CD4-positive, alpha-beta memory T cell (primary cell): ENCODE measurements at regions of chr17 and their contacts with region 1.

Region 1: DNA sequence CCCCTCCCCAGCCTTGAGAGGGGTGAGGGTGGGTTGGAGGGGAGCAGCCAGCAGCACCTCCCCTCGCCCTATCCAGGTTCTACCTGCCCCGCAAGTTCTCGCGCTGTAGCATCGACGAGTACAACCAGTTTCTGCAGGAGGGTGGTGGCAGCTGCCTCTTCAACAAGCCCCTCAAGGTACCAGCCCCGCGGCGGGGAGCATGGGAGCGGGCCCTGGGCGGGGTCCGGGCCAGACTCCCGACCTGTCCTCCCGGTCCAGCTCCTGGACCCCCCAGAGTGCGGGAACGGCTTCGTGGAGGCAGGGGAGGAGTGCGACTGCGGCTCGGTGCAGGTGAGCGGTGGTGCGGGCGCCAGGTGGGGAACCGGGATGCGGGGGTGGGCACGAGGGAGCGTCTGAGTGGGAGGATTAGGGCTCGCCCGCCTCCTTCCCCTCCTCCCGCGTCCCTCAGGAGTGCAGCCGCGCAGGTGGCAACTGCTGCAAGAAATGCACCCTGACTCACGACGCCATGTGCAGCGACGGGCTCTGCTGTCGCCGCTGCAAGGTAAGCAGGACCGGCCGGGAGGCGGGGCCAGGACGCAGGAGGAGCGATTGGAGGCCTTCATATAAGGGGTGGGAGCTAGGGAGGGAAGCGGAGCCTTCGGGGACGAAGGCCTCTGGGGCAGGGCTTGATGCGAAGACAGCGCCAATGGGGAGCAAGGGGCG is 16.5 kb downstream of the ADAM11 start:
- DNase-seq: peak; percentile 94 to 99 (median 96)
- H3K4me3 ChIP-seq: peak overlapping the region; percentile 57 to 73
- H3K4me3 Mint-ChIP-seq: peak overlapping the region; percentile 88 to 97 (median 90)
- H3K27ac ChIP-seq: peak overlapping the region; percentile 30
- H3K27ac Mint-ChIP-seq: peak overlapping the region; percentile 72 to 89 (median 84)
- H3K4me1 ChIP-seq: peaks cover 18% of the 10 kb centered on the region
- H3K4me1 Mint-ChIP-seq: peaks cover 5 to 21% (median 9%) of the 10 kb centered on the region in 4 donors
- H3K27me3 ChIP-seq: no peaks in the 10 kb centered on the region
- H3K27me3 Mint-ChIP-seq: peaks cover 4 to 8% of the 10 kb centered on the region in 2 donors

Region 2: GRCh38 chr17:44864866-44865660 is 89.8 kb after region 1 on chr17:
- CTCF ChIA-PET with region 1: interaction called, 263 read pairs
- POLR2A ChIA-PET with region 1: interaction called, 6 read pairs
- intact Hi-C with region 1: loop called (anchors 1 kb)
- DNase-seq: peak; percentile 62 to 70 (median 69)
- H3K4me3 ChIP-seq: no peak overlapping the region
- H3K4me3 Mint-ChIP-seq: no peak overlapping the region
- H3K27ac ChIP-seq: no peak overlapping the region
- H3K27ac Mint-ChIP-seq: no peak overlapping the region
- H3K4me1 ChIP-seq: no peaks in the 10 kb centered on the region
- H3K4me1 Mint-ChIP-seq: peaks cover 0 to 4% (median 0%) of the 10 kb centered on the region in 4 donors
- H3K27me3 ChIP-seq: no peaks in the 10 kb centered on the region
- H3K27me3 Mint-ChIP-seq: no peaks in the 10 kb centered on the region

Region 3: GRCh38 chr17:44899069-44899782 is 123.9 kb after region 1 on chr17 and contains the start of gene EFTUD2:
- CTCF ChIA-PET with region 1: interaction called, 5 read pairs
- POLR2A ChIA-PET with region 1: interaction called, 5 read pairs
- intact Hi-C with region 1: loop called (anchors 1 kb)
- DNase-seq: peak; percentile 93 to 98 (median 96)
- H3K4me3 ChIP-seq: peak within 1 kb of the TSS; percentile 71 to 92
- H3K4me3 Mint-ChIP-seq: peak within 1 kb of the TSS; percentile 91 to 99 (median 94)
- H3K27ac ChIP-seq: peak within 1 kb of the TSS; percentile 85
- H3K27ac Mint-ChIP-seq: peak within 1 kb of the TSS; percentile 99 to 100 (median 100)
- H3K4me1 ChIP-seq: peaks cover 21% of the 10 kb centered on the region
- H3K4me1 Mint-ChIP-seq: peaks cover 18 to 48% (median 28%) of the 10 kb centered on the region in 4 donors
- H3K27me3 ChIP-seq: no peaks in the 10 kb centered on the region
- H3K27me3 Mint-ChIP-seq: no peaks in the 10 kb centered on the region
- total RNA-seq, gene EFTUD2: 98.9 to 101 TPM

Region 4: GRCh38 chr17:45021607-45022287 is 246.5 kb after region 1 on chr17:
- CTCF ChIA-PET with region 1: interaction called, 3 read pairs
- POLR2A ChIA-PET with region 1: interaction called, 5 read pairs
- intact Hi-C with region 1: loop called (anchors 1 kb)
- DNase-seq: peak; percentile 50 to 66 (median 55)
- H3K4me3 ChIP-seq: peak overlapping the region in 1 of 2 donors; percentile 47
- H3K4me3 Mint-ChIP-seq: peak overlapping the region in 7 of 8 donors; percentile 35 to 84 (median 69)
- H3K27ac ChIP-seq: no peak overlapping the region
- H3K27ac Mint-ChIP-seq: peak overlapping the region in 3 of 7 donors; percentile 7 to 39 (median 24)
- H3K4me1 ChIP-seq: peaks cover 25% of the 10 kb centered on the region
- H3K4me1 Mint-ChIP-seq: peaks cover 11 to 22% (median 18%) of the 10 kb centered on the region in 4 donors
- H3K27me3 ChIP-seq: peaks cover 20% of the 10 kb centered on the region
- H3K27me3 Mint-ChIP-seq: peaks cover 26 to 31% of the 10 kb centered on the region in 2 donors

Region 5: DNA sequence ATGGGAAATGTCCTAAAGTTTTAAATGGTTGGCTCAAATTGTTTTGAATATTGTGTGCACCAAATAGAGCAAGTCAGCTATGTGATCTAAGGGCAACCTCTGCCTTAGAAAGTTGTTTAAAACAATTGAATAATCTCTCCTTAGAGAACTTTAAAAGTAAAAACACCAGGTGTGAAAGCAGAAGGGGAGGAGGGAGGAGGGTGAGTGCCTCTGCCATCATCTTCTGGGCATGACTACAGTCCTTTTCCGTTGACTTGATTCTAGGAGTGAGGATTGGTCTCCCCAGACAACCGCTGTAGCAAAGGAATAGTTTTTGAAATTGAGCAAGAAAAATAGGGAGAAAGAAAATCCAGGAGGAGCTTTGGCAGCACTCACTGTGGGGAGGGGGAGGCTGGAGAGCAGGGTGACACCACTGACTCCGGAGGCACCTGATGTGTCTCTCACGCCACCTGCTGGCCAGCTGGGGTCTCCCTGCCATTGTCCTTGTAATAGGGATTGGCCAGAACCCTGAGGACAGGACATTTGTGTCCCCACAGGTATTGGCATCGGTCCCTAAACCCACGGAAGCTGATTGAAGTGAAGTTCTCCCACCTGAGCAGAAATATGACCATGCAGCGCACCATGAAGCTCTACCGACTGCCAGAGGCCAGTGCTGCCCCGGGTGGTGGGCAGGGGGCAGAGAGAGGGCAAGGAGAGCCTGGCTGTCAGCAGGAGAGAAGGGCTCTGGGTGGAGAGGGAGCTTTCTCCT is 323.8 kb after region 1 on chr17:
- CTCF ChIA-PET with region 1: interaction called, 16 read pairs
- POLR2A ChIA-PET with region 1: no interaction called
- intact Hi-C with region 1: loop called (anchors 1 kb)
- DNase-seq: peak; percentile 58 to 76 (median 67)
- H3K4me3 ChIP-seq: no peak overlapping the region
- H3K4me3 Mint-ChIP-seq: no peak overlapping the region
- H3K27ac ChIP-seq: no peak overlapping the region
- H3K27ac Mint-ChIP-seq: peak overlapping the region in 3 of 7 donors; percentile 59 to 66 (median 66)
- H3K4me1 ChIP-seq: no peaks in the 10 kb centered on the region
- H3K4me1 Mint-ChIP-seq: no peaks in the 10 kb centered on the region
- H3K27me3 ChIP-seq: no peaks in the 10 kb centered on the region
- H3K27me3 Mint-ChIP-seq: no peaks in the 10 kb centered on the region